Sigmoid colon (tissue), 7 donors: ENCODE measurements at regions of chr6 and their contacts with region 1.

Region 1: DNA sequence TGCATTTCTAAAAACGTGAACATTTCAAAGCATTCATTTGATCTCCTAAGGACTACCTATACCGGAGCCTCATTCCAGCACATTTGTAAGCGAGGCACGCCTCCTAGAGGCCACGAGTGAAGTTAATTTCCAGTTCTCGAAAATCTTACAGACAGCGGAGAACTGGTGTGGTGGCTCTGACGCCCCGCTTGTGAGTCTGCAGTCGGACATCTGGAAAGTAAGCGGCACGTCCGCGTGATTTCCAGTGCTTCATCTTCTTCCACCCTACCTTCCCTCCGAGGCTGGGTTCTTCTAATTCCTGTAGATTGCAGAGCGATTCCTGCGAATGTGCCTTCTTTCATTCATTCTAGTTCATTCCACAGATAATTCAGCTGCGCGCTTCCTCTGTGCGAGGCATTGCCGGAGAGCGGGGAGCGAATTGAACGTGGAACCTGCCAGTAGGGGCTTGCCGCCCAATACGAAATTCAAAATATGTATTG is 810 bp upstream of the PRIM2 start:
- DNase-seq: peak; percentile 91
- H3K4me3 ChIP-seq: peak overlapping the region; percentile 38 to 60 (median 55)
- H3K27ac ChIP-seq: peak overlapping the region; percentile 72 to 89 (median 87)
- H3K4me1 ChIP-seq: peaks cover 0 to 56% (median 40%) of the 10 kb centered on the region in 4 donors
- H3K27me3 ChIP-seq: no peaks in the 10 kb centered on the region
- CTCF ChIP-seq: peak; percentile 68 to 87 (median 76)
- EP300 ChIP-seq: no peak
- POLR2A ChIP-seq: peak in 1 of 2 donors; percentile 13

Region 2: GRCh38 chr6:56955171-56956045 is 361.2 kb before region 1 on chr6:
- intact Hi-C with region 1: loop called (anchors 2 kb)
- DNase-seq: peak; percentile 91
- H3K4me3 ChIP-seq: peak overlapping the region; percentile 46 to 71 (median 68)
- H3K27ac ChIP-seq: peak overlapping the region; percentile 59 to 81 (median 78)
- H3K4me1 ChIP-seq: peaks cover 0 to 21% (median 10%) of the 10 kb centered on the region in 4 donors
- H3K27me3 ChIP-seq: no peaks in the 10 kb centered on the region
- CTCF ChIP-seq: peak in 2 of 4 experiments; percentile 60 to 65
- EP300 ChIP-seq: no peak
- POLR2A ChIP-seq: no peak

Region 3: DNA sequence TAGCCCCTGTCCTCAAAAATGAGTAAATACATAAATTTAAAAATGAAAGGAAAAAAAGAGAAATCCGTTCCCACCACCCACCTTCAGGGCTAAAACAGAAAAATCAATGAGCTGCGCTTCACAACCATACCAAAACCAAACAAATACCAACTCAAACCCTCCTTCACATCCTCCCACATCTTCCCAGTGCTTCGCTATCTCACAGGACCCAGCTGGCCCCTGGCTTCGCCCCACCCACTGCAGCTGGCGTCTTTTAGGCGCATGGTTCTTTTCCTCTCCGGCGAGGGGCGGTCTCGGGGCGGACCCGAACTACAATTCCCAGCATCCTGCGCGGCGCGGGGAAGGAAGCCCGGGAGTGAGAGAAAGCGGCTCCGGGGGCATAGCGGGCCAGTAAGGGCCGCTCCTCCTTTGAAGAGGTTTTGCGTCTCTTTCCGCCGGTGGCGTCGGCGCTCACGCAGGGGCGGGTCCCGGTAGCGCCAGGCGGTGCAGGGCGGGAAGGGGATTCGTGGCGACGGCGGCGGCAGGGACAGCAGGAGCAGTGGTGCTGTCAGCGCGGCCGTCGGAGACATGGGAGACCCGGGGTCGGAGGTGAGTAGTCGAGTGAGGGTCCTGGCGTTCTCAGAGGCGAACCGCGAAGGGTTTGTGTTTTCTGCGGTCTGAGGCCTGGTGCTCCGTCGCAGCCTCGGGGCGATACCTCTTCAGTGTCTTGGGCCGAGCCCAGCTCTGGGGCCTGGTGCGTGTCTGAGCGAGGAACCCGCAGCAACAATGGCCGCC is 226.7 kb before region 1 on chr6 and contains the start of gene ZNF451:
- intact Hi-C with region 1: loop called (anchors 2 kb)
- DNase-seq: peak; percentile 99
- H3K4me3 ChIP-seq: peak within 1 kb of the TSS; percentile 50 to 61 (median 56)
- H3K27ac ChIP-seq: peak within 1 kb of the TSS; percentile 85 to 90 (median 88)
- H3K4me1 ChIP-seq: peaks cover 0 to 42% (median 31%) of the 10 kb centered on the region in 4 donors
- H3K27me3 ChIP-seq: no peaks in the 10 kb centered on the region
- CTCF ChIP-seq: no peak
- EP300 ChIP-seq: peak in 1 of 4 donors; percentile 67
- POLR2A ChIP-seq: peak; percentile 81 to 92
- total RNA-seq, gene ZNF451: 56.6 to 70.1 (median 62.9) TPM

Region 4: GRCh38 chr6:57190140-57190539 is 126.5 kb before region 1 on chr6:
- intact Hi-C with region 1: loop called (anchors 5 kb)
- DNase-seq: no peak
- H3K4me3 ChIP-seq: no peak overlapping the region
- H3K27ac ChIP-seq: peak overlapping the region in 3 of 4 donors; percentile 23 to 77 (median 72)
- H3K4me1 ChIP-seq: peaks cover 0 to 54% (median 16%) of the 10 kb centered on the region in 4 donors
- H3K27me3 ChIP-seq: no peaks in the 10 kb centered on the region
- CTCF ChIP-seq: peak in 3 of 4 experiments; percentile 37 to 56 (median 45)
- EP300 ChIP-seq: no peak
- POLR2A ChIP-seq: no peak

Region 5: GRCh38 chr6:57262901-57263694 is 53.5 kb before region 1 on chr6:
- intact Hi-C with region 1: loop called (anchors 2 kb)
- DNase-seq: peak; percentile 82
- H3K4me3 ChIP-seq: peak overlapping the region in 1 of 4 donors; percentile 4
- H3K27ac ChIP-seq: peak overlapping the region; percentile 77 to 95 (median 90)
- H3K4me1 ChIP-seq: peaks cover 0 to 92% (median 74%) of the 10 kb centered on the region in 4 donors
- H3K27me3 ChIP-seq: no peaks in the 10 kb centered on the region
- CTCF ChIP-seq: no peak
- EP300 ChIP-seq: peak; percentile 22 to 73 (median 61)
- POLR2A ChIP-seq: no peak

Region 6: DNA sequence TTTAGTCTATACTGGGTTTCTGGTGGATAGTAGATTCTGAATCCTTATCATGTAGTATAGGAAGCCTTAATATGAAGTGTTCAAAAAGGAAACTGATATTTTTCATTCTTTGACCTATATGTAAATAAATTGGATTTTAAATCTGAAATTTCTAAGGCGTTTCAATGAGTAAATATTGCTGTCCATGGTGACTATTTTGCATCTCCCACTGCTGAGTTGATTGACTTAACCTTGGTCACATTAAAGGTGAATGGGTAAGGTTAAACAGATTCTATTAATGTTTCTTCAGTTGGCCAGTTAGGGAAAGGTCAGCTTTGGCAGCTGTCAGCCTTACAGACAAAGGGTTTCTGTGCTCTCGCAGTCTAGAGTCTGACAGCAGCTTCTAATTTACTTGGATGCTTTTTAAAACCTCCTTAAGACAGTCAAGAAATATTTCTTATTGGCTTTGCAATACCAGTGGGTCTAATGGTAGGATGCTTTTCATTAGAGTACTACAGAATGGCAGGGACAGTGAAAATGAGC is 25.6 kb after region 1 on chr6:
- intact Hi-C with region 1: no loop called
- DNase-seq: no peak
- H3K4me3 ChIP-seq: no peak overlapping the region
- H3K27ac ChIP-seq: no peak overlapping the region
- H3K4me1 ChIP-seq: no peaks in the 10 kb centered on the region
- H3K27me3 ChIP-seq: no peaks in the 10 kb centered on the region
- CTCF ChIP-seq: no peak
- EP300 ChIP-seq: no peak
- POLR2A ChIP-seq: no peak